ENCODE measurements at regions of chr1 and their contacts with region 1.

Region 1: DNA sequence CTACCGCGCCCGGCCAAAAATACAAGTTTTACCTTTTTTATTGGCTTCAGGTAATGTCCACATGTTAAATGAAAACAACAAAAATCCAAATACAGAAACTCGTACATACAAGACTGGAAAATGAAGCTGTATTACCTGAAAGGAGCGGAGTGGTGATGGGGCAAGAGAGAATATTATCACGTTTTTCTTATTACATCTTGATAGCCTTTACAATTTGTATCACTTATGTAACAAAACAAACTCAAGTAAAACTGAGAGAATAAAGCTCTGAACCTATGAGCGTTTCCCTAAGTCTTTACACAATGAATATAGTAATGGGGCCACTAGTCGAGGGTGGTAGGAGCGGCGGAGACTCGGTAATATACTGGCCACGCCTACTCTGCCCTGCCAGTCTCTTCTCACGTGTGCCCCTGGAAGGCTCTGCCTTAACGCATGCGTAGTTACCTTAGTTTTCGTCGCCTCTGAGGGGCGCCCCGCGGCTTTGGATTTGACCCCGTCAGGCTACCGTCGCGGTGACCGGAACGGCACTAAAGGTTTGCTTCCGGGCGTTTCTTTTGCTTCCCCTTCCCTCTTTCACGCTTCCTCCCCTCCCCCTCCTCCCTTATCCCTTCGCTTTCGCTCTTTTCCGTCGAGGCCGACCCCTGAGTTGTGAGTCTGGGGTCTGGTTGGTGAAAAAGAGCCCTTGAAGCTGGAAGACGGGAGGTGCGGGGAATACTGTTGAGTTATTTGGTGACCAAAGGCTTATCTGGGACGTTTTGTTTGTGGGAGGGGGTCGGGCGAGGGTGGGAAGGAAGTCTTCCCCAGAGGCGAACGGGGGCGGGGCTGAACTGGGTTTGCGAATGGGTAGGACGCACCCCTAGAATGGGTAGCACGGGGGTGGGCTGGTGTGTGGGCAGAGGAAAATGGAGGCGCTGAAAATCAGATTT is at the start of gene SETDB1:
- DNase-seq: peak; percentile 98
- H3K4me3 Mint-ChIP-seq: peak within 1 kb of the TSS; percentile 96
- H3K27ac Mint-ChIP-seq: peak within 1 kb of the TSS; percentile 94
- H3K4me1 Mint-ChIP-seq: peaks cover 21% of the 10 kb centered on the region
- H3K27me3 Mint-ChIP-seq: no peaks in the 10 kb centered on the region
- total RNA-seq, gene SETDB1: 42.3 to 50.0 TPM

Region 2: GRCh38 chr1:150321826-150322166 is 604.3 kb before region 1 on chr1:
- CTCF ChIA-PET with region 1: no interaction called
- POLR2A ChIA-PET with region 1: no interaction called
- intact Hi-C with region 1: loop called (anchors 5 kb)
- DNase-seq: no peak
- H3K4me3 Mint-ChIP-seq: peak overlapping the region; percentile 99
- H3K27ac Mint-ChIP-seq: peak overlapping the region; percentile 97
- H3K4me1 Mint-ChIP-seq: peaks cover 27% of the 10 kb centered on the region
- H3K27me3 Mint-ChIP-seq: no peaks in the 10 kb centered on the region

Region 3: DNA sequence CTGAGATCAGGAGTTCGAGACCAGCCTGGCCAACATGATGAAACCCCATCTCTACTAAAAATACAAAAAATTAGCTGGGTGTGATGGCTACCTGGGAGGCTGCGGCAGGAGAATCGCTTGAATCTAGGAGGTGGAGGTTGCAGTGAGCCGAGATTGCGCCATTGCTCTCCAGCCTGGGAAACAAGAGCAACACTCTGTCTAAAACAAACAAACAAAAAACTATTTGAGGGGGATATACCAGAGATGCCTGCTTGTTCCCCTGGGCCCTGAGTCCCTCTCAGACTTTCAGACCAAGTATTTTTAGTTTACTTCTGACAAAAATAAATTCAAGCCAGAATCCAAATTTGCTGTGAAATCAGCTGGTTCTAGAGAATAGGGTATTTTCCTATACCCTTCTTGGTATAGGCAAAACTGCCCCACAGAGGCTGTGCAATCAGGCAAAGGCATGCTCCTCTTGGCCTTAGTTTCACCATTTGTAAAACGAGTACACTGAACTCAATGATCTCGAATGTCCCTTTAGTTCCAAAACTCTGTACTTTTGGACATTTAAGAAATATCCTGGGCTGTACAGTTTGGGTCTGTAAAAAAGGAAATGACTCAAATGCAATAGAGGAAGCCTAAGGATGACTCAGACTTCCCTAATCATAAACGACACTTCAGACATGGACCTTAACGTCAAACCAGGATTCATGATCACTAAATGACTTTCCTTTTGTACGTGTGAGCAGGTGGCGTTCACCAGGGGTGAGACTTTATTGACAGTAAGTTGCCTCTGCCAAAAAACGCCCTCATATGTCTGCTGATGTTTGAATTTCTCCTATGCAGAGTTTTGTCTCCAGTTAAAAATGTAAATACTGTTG is 312.8 kb before region 1 on chr1:
- CTCF ChIA-PET with region 1: interaction called, 6 read pairs
- POLR2A ChIA-PET with region 1: interaction called, 4 read pairs
- intact Hi-C with region 1: loop called (anchors 5 kb)
- DNase-seq: peak; percentile 75
- H3K4me3 Mint-ChIP-seq: peak overlapping the region; percentile 62
- H3K27ac Mint-ChIP-seq: peak overlapping the region; percentile 97
- H3K4me1 Mint-ChIP-seq: peaks cover 66% of the 10 kb centered on the region
- H3K27me3 Mint-ChIP-seq: no peaks in the 10 kb centered on the region

Region 4: GRCh38 chr1:150765296-150765976 is 160.6 kb before region 1 on chr1 and contains the start of gene CTSS:
- CTCF ChIA-PET with region 1: interaction called, 3 read pairs
- POLR2A ChIA-PET with region 1: no interaction called
- intact Hi-C with region 1: loop called (anchors 1 kb)
- DNase-seq: no peak
- H3K4me3 Mint-ChIP-seq: peak within 1 kb of the TSS; percentile 88
- H3K27ac Mint-ChIP-seq: peak within 1 kb of the TSS; percentile 88
- H3K4me1 Mint-ChIP-seq: peaks cover 45% of the 10 kb centered on the region
- H3K27me3 Mint-ChIP-seq: no peaks in the 10 kb centered on the region
- total RNA-seq, gene CTSS: 39.4 to 45.5 TPM

Region 5: DNA sequence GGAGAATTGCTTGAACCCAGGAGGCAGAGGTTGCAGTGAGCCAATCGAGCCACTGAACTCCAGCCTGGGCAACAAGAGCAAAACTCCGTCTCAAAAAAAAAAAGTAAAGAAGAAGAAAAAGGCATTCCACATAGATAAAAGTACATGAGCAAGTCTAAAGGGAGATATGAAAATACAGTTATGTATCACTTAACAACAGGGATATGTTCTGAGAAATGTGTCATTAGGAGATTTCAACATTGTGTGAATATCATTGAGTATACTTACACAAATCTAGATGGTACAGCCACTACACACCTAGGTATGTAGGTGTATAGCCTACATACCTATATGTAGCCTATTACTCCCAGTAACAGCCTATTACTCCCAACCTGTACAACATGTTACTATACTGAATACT is 62.4 kb before region 1 on chr1:
- CTCF ChIA-PET with region 1: interaction called, 10 read pairs
- POLR2A ChIA-PET with region 1: no interaction called
- intact Hi-C with region 1: no loop called
- DNase-seq: no peak
- H3K4me3 Mint-ChIP-seq: no peak overlapping the region
- H3K27ac Mint-ChIP-seq: no peak overlapping the region
- H3K4me1 Mint-ChIP-seq: peaks cover 31% of the 10 kb centered on the region
- H3K27me3 Mint-ChIP-seq: no peaks in the 10 kb centered on the region

Region 6: DNA sequence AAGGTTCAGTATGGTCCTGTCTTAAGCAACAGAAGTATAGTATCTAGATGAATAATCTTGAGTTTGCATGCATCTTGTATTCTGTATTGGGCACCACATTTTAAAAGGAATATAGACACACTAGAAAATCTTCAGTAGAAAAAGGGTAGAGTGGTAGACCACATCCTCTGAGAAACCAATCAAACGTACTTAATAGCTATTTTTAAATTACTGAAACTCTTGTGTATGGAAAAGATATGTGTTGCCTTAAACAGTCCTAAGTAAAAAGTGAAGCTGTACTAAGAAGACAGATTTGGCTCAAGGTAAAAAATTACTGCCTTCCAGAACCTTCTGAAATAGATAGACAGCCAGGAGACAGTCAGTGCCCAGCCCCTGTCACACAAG is 36.1 kb before region 1 on chr1:
- CTCF ChIA-PET with region 1: interaction called, 10 read pairs
- POLR2A ChIA-PET with region 1: interaction called, 3 read pairs
- intact Hi-C with region 1: loop called (anchors 1 kb)
- DNase-seq: no peak
- H3K4me3 Mint-ChIP-seq: no peak overlapping the region
- H3K27ac Mint-ChIP-seq: peak overlapping the region; percentile 13
- H3K4me1 Mint-ChIP-seq: peaks cover 17% of the 10 kb centered on the region
- H3K27me3 Mint-ChIP-seq: no peaks in the 10 kb centered on the region

Region 7: GRCh38 chr1:151008190-151008860 is 82.2 kb after region 1 on chr1 and contains the start of gene PRUNE1:
- CTCF ChIA-PET with region 1: interaction called, 12 read pairs
- POLR2A ChIA-PET with region 1: no interaction called
- intact Hi-C with region 1: loop called (anchors 1 kb)
- DNase-seq: peak; percentile 97
- H3K4me3 Mint-ChIP-seq: peak within 1 kb of the TSS; percentile 99
- H3K27ac Mint-ChIP-seq: peak within 1 kb of the TSS; percentile 97
- H3K4me1 Mint-ChIP-seq: peaks cover 64% of the 10 kb centered on the region
- H3K27me3 Mint-ChIP-seq: no peaks in the 10 kb centered on the region
- total RNA-seq, gene PRUNE1: 12.5 to 17.5 TPM

Region 8: DNA sequence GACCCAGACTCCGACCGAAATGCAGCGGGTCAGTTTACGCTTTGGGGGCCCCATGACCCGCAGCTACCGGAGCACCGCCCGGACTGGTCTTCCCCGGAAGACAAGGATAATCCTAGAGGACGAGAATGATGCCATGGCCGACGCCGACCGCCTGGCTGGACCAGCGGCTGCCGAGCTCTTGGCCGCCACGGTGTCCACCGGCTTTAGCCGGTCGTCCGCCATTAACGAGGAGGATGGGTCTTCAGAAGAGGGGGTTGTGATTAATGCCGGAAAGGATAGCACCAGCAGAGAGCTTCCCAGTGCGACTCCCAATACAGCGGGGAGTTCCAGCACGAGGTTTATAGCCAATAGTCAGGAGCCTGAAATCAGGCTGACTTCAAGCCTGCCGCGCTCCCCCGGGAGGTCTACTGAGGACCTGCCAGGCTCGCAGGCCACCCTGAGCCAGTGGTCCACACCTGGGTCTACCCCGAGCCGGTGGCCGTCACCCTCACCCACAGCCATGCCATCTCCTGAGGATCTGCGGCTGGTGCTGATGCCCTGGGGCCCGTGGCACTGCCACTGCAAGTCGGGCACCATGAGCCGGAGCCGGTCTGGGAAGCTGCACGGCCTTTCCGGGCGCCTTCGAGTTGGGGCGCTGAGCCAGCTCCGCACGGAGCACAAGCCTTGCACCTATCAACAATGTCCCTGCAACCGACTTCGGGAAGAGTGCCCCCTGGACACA is 122.0 kb after region 1 on chr1:
- CTCF ChIA-PET with region 1: no interaction called
- POLR2A ChIA-PET with region 1: no interaction called
- intact Hi-C with region 1: no loop called
- DNase-seq: peak; percentile 74
- H3K4me3 Mint-ChIP-seq: peak overlapping the region; percentile 88
- H3K27ac Mint-ChIP-seq: peak overlapping the region; percentile 82
- H3K4me1 Mint-ChIP-seq: peaks cover 46% of the 10 kb centered on the region
- H3K27me3 Mint-ChIP-seq: no peaks in the 10 kb centered on the region

Region 9: DNA sequence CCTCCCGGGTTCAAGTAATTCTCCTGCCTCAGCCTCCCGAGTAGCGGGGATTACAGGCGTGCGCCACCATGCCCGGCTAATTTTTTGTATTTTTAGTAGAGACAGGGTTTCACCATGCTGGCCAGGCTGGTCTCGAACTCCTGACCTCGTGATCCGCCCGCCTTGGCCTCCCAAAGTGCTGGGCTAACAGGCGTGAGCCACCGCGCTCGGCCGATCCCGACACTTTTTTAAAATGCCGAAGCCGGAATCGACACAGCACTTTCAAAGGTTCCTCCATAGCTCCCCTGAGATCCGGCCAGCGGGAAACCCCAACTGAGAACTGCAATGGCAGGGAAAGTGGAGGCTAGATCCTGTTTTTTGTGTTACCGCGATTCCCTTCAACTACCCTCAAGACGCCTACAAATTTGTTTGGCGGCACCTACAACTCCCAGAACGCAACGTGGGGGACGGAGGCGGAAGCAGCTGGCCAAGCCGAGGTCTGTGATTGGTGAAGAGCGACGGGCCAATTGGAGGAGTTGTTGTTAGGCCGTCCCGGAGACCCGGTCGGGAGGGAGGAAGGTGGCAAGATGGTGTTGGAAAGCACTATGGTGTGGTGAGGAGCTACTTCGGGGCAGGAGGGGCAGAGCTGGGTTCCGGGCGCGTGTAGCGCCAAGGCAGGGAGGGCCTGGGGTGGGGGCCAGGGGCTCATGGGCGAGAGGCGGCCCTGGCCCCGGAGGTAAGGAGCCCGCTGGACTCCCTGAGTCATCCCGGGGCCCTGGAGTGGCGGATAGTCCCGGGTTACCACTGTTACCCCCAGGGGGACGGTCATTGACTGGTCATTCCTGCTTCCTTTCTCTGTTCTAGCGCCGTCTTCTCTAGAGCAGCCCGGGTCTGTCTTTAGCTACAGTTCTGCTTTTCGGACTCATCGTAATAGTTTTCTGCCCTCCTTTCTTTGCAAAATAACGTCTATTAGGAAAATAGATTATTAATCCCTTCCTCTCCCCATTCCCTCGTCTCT is 328.4 kb after region 1 on chr1 and contains the start of gene PSMD4:
- CTCF ChIA-PET with region 1: no interaction called
- POLR2A ChIA-PET with region 1: no interaction called
- intact Hi-C with region 1: no loop called
- DNase-seq: peak; percentile 97
- H3K4me3 Mint-ChIP-seq: peak within 1 kb of the TSS; percentile 92
- H3K27ac Mint-ChIP-seq: peak within 1 kb of the TSS; percentile 81
- H3K4me1 Mint-ChIP-seq: peaks cover 25% of the 10 kb centered on the region
- H3K27me3 Mint-ChIP-seq: peaks cover 2% of the 10 kb centered on the region
- total RNA-seq, gene PSMD4: 212 to 227 TPM

Region 10: DNA sequence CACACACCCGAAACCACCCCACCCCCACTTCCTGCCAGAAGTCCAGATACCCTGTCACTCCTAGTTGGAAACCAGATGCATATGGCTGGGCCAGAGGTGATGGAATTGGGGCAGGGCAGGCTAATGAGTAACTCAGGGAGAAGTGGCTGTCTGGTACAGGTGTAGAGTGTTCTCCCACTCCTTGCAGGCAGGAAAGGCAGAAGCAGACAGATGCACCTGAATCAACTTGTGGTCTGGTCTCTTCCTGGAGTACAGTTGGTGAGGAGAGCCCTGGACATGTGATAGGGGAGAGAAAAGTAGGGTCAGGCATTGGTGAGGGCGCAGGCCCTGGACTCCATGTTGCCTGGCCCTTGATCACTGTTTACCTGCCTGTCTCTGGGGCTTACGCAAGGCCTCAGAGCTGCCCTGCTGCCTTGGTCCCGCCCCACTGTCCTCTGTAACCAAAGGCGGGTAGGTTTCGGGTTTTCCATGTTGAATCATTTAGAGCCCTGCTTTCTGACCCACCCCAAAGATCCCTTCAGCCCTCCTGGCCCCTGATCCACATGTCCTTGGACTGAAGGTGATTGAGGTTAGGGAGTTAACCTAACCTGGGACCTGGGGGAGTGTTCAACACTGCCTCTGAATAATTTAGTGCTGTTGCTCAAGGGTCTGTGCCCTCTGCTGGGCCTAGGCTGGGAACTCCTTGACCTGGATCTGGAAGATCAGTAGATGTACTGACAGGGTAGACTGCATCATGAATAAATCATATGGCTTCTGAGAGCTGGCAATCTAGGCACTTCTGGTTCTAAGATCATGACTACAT is 587.7 kb after region 1 on chr1:
- CTCF ChIA-PET with region 1: no interaction called
- POLR2A ChIA-PET with region 1: no interaction called
- intact Hi-C with region 1: no loop called
- DNase-seq: peak; percentile 34
- H3K4me3 Mint-ChIP-seq: no peak overlapping the region
- H3K27ac Mint-ChIP-seq: no peak overlapping the region
- H3K4me1 Mint-ChIP-seq: peaks cover 20% of the 10 kb centered on the region
- H3K27me3 Mint-ChIP-seq: no peaks in the 10 kb centered on the region